Mammary epithelial cell (primary cell): ENCODE measurements at regions of chr2 and their contacts with region 1.

Region 1: GRCh38 chr2:66301022-66301766 is 133.7 kb upstream of the MEIS1 start:
- DNase-seq: no peak
- H3K4me3 ChIP-seq: no peak overlapping the region
- H3K27ac ChIP-seq: no peak overlapping the region
- H3K4me1 ChIP-seq: no peaks in the 10 kb centered on the region
- H3K27me3 ChIP-seq: peaks cover 3% of the 10 kb centered on the region
- CTCF ChIP-seq: no peak

Region 2: GRCh38 chr2:66240286-66240685 is 60.9 kb before region 1 on chr2:
- CTCF ChIA-PET with region 1: no interaction called
- dilution Hi-C with region 1: no loop called
- in situ Hi-C with region 1: no loop called
- intact Hi-C with region 1: no loop called
- DNase-seq: no peak
- H3K4me3 ChIP-seq: no peak overlapping the region
- H3K27ac ChIP-seq: no peak overlapping the region
- H3K4me1 ChIP-seq: no peaks in the 10 kb centered on the region
- H3K27me3 ChIP-seq: no peaks in the 10 kb centered on the region
- CTCF ChIP-seq: no peak

Region 3: GRCh38 chr2:66252109-66252508 is 49.1 kb before region 1 on chr2:
- CTCF ChIA-PET with region 1: no interaction called
- dilution Hi-C with region 1: loop called (anchors 5 kb)
- in situ Hi-C with region 1: no loop called
- intact Hi-C with region 1: no loop called
- DNase-seq: no peak
- H3K4me3 ChIP-seq: no peak overlapping the region
- H3K27ac ChIP-seq: no peak overlapping the region
- H3K4me1 ChIP-seq: no peaks in the 10 kb centered on the region
- H3K27me3 ChIP-seq: no peaks in the 10 kb centered on the region
- CTCF ChIP-seq: no peak

Region 4: DNA sequence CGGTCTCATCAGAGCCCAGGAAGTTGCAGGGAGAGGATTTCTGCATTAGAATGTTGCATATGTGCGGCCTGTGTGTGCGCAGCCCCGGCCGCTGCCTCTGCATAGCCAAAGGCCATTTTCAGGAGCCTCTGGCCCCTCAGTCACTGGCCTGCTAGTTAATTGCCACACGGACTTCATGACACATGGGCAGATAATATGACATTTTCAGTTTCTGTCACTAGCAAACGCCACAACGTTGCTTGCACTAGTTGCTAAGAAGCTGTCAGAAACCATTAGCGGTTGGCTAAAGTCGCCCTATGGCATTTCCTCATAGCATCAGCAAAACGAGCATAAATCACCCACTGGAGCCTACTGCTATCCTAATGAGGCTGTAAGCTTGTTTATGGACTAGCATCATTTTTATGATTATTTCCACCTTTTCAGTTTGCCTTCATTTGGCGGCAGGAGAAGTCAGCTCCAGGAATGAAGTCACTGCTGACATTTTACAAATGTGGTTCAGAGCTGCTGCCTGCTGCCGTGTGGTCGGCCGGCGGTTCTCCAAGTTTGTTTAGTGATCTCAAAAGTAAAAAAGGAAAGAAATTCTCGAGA is 207.4 kb after region 1 on chr2:
- CTCF ChIA-PET with region 1: no interaction called
- dilution Hi-C with region 1: no loop called
- in situ Hi-C with region 1: no loop called
- intact Hi-C with region 1: no loop called
- DNase-seq: no peak
- H3K4me3 ChIP-seq: no peak overlapping the region
- H3K27ac ChIP-seq: no peak overlapping the region
- H3K4me1 ChIP-seq: peaks cover 5% of the 10 kb centered on the region
- H3K27me3 ChIP-seq: no peaks in the 10 kb centered on the region
- CTCF ChIP-seq: no peak

Region 5: GRCh38 chr2:67070826-67071225 is 769.6 kb after region 1 on chr2:
- CTCF ChIA-PET with region 1: no interaction called
- dilution Hi-C with region 1: no loop called
- in situ Hi-C with region 1: no loop called
- intact Hi-C with region 1: no loop called
- DNase-seq: no peak
- H3K4me3 ChIP-seq: no peak overlapping the region
- H3K27ac ChIP-seq: no peak overlapping the region
- H3K4me1 ChIP-seq: no peaks in the 10 kb centered on the region
- H3K27me3 ChIP-seq: no peaks in the 10 kb centered on the region
- CTCF ChIP-seq: no peak